ENCODE measurements at regions of chr10 and their contacts with region 1.

Region 1: GRCh38 chr10:88687853-88688467 is 18.1 kb upstream of the LIPK start:
- DNase-seq: no peak
- ATAC-seq: peak; percentile 61 to 71 (median 69)
- H3K4me3 ChIP-seq: no peak overlapping the region
- H3K27ac ChIP-seq: no peak overlapping the region
- H3K4me1 ChIP-seq: no peaks in the 10 kb centered on the region
- H3K27me3 ChIP-seq: no peaks in the 10 kb centered on the region
- CTCF ChIP-seq: peak; percentile 65 to 80 (median 77)
- POLR2A ChIP-seq: no peak

Region 2: GRCh38 chr10:88810196-88810961 is 122.4 kb after region 1 on chr10:
- intact Hi-C with region 1: loop called (anchors 5 to 10 kb)
- DNase-seq: no peak
- ATAC-seq: peak; percentile 83 to 89 (median 86)
- H3K4me3 ChIP-seq: no peak overlapping the region
- H3K27ac ChIP-seq: no peak overlapping the region
- H3K4me1 ChIP-seq: no peaks in the 10 kb centered on the region
- H3K27me3 ChIP-seq: no peaks in the 10 kb centered on the region
- CTCF ChIP-seq: peak; percentile 52 to 79 (median 77)
- POLR2A ChIP-seq: no peak